Activated naive CD4-positive, alpha-beta T cell treated with anti-CD3 and anti-CD28 coated beads, Interleukin-2, amount 10 ng/mL, durations not matched to agents 7 days and 5 days (primary cell): ENCODE measurements at regions of chr22 and their contacts with region 1.

Region 1: DNA sequence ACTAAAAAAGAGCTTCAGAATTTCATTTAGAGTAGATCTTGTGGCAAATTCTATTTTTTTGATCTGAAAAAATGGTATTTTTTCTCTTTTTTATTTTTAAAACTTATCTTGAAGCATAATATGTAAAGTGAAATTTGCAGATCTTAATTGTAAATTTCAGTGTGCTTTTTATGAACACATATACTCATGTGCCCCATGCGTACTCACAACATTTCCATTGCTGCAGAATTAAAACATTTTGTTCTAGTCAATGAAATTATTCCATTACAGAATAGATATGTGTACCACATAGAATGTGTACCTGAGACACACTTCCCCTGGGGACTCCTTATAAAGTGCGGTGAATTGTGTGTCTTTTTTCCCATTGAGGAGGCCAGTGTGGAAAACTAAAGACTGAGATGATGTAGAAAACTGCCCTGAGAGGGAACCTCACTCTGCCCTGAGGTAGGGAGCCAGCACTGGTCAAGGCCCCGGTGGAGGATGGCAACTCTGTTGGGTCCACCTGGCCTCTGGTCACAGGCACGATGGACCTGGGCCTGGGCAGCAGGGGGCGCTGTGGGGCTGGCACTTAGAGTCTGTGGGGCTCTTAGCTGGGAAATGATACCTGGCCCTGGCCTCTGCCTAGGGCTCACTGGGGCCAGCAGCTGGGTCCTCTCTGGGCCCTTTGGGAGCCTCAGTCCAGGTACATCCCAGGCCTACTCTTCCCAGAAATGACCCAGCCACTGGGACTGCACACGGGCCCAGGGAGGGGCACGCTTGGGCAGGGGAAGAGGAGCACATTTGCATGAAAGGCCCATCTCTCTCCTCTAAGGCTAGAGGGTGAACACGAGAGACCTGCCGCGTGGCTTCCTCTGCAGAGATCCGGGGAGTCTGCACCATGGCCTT is 77.9 kb upstream of the TOP3B start:
- DNase-seq: peak; percentile 74
- H3K4me3 Mint-ChIP-seq: no peak overlapping the region
- H3K27ac Mint-ChIP-seq: no peak overlapping the region
- H3K4me1 Mint-ChIP-seq: no peaks in the 10 kb centered on the region
- H3K27me3 Mint-ChIP-seq: peaks cover 52% of the 10 kb centered on the region

Region 2: GRCh38 chr22:21952586-21953571 is 107.6 kb before region 1 on chr22 and contains the start of gene PPM1F:
- CTCF ChIA-PET with region 1: no interaction called
- DNase-seq: peak; percentile 91
- H3K4me3 Mint-ChIP-seq: peak within 1 kb of the TSS; percentile 82
- H3K27ac Mint-ChIP-seq: peak within 1 kb of the TSS; percentile 75
- H3K4me1 Mint-ChIP-seq: peaks cover 16% of the 10 kb centered on the region
- H3K27me3 Mint-ChIP-seq: peaks cover 27% of the 10 kb centered on the region

Region 3: GRCh38 chr22:21970037-21970799 is 90.2 kb before region 1 on chr22:
- CTCF ChIA-PET with region 1: no interaction called
- DNase-seq: no peak
- H3K4me3 Mint-ChIP-seq: no peak overlapping the region
- H3K27ac Mint-ChIP-seq: no peak overlapping the region
- H3K4me1 Mint-ChIP-seq: no peaks in the 10 kb centered on the region
- H3K27me3 Mint-ChIP-seq: no peaks in the 10 kb centered on the region

Region 4: DNA sequence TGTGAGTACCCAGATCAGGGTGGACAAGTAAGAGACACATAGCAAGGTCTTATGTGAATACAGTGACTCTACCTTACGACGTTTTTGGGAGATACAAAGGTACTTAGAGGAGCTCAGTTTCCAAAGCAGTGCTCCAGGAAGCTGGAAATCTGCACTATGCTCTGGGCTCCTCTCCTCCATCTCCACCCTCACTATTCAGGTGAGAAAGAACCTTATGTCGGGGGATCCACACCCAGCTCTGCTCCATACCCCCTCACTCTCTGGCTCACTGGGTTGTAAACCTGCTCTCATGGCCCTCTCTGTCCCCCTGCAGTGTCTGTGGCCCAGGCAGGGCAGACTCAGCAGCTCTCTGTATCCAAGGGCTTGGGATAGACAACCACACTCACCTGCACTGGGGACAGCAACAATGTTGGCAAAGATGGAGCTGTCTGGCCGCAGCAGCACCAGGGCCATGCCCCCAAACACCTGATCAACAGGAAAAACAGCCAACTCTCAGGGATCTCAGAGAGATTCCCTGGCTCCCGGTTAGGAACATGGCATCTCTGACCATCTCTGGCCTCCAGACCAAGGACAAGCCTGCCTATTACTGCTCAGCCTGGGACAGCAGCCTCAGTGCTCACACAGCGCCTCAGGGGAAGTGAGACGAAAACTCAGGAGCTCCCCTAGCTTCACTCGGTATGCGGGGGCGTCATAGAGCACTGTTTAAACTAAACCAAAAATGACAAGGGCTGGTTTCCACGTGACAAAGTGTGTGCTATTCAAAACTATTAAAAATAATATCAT is 17.0 kb before region 1 on chr22:
- CTCF ChIA-PET with region 1: interaction called, 19 read pairs
- DNase-seq: no peak
- H3K4me3 Mint-ChIP-seq: no peak overlapping the region
- H3K27ac Mint-ChIP-seq: no peak overlapping the region
- H3K4me1 Mint-ChIP-seq: no peaks in the 10 kb centered on the region
- H3K27me3 Mint-ChIP-seq: peaks cover 40% of the 10 kb centered on the region

Region 5: GRCh38 chr22:22072169-22072836 is 11.9 kb after region 1 on chr22:
- CTCF ChIA-PET with region 1: interaction called, 11 read pairs
- DNase-seq: no peak
- H3K4me3 Mint-ChIP-seq: no peak overlapping the region
- H3K27ac Mint-ChIP-seq: no peak overlapping the region
- H3K4me1 Mint-ChIP-seq: no peaks in the 10 kb centered on the region
- H3K27me3 Mint-ChIP-seq: peaks cover 42% of the 10 kb centered on the region

Region 6: DNA sequence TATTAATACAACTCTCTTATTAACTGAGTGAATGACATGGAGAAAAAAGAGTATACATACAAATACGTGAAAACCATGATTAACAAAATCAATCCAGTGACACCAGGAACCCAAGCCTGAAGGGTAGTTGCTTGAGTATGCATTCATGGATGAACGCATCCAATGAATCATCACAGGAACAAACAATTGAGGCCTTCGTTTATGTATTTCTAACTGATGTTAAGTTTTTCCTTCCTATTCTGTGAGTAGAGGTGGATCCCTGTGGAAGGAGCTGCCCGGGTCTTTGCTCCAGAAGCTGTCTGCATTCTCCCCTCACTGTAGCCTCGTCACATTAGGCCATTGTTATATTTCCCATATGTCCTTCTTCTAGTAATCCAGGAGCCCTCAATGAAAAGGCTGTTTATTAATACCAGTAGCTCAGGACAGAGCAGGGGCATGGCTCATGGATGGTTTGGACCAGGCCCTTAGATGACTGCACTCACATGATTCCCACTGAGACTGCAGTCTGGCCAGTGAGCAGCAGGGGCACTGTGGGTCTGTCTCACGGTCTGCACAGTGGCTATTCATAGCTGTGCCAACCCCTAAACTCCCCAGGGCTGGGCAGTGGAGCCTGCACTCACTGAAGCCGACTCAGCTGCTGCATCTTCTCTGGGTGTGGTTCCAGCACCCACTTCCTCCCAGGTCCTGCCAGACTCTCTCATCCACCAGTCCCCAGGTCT is 50.3 kb after region 1 on chr22:
- CTCF ChIA-PET with region 1: interaction called, 10 read pairs
- DNase-seq: peak; percentile 60
- H3K4me3 Mint-ChIP-seq: no peak overlapping the region
- H3K27ac Mint-ChIP-seq: peak overlapping the region; percentile 29
- H3K4me1 Mint-ChIP-seq: peaks cover 12% of the 10 kb centered on the region
- H3K27me3 Mint-ChIP-seq: peaks cover 12% of the 10 kb centered on the region

Region 7: GRCh38 chr22:22235558-22235957 is 175.1 kb after region 1 on chr22:
- CTCF ChIA-PET with region 1: interaction called, 10 read pairs
- DNase-seq: peak; percentile 74
- H3K4me3 Mint-ChIP-seq: no peak overlapping the region
- H3K27ac Mint-ChIP-seq: no peak overlapping the region
- H3K4me1 Mint-ChIP-seq: peaks cover 15% of the 10 kb centered on the region
- H3K27me3 Mint-ChIP-seq: no peaks in the 10 kb centered on the region